Activated naive CD4-positive, alpha-beta T cell treated with anti-CD3 and anti-CD28 coated beads for 36 hours (primary cell): ENCODE measurements at regions of chr9 and their contacts with region 1.

Region 1: DNA sequence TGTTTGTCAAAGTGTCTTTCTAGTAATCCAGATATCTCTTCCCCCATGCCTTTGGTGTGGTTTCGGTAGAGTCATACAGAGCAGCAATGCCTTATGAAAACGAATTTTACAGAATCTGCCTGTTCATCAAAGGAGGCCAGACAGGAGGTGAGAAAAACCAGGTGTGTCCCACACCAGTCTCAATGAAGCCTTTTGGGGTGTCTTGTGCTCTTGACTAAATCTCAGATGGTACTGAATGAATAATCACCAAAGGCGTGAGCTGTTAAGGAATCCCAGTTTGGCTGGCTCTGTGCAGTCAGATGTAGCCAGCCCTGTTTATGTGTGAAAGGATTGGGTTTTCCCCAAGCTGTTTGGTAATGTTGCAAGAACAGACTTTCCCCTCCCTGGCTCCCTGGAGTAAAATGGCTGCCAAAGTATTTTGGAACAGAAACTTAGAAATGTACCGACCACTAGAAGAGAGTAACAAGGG is 70.8 kb upstream of the CDKN2B start:
- DNase-seq: peak; percentile 84
- H3K4me3 Mint-ChIP-seq: no peak overlapping the region
- H3K27ac Mint-ChIP-seq: no peak overlapping the region
- H3K4me1 Mint-ChIP-seq: peaks cover 33% of the 10 kb centered on the region
- H3K27me3 Mint-ChIP-seq: peaks cover 50% of the 10 kb centered on the region

Region 2: DNA sequence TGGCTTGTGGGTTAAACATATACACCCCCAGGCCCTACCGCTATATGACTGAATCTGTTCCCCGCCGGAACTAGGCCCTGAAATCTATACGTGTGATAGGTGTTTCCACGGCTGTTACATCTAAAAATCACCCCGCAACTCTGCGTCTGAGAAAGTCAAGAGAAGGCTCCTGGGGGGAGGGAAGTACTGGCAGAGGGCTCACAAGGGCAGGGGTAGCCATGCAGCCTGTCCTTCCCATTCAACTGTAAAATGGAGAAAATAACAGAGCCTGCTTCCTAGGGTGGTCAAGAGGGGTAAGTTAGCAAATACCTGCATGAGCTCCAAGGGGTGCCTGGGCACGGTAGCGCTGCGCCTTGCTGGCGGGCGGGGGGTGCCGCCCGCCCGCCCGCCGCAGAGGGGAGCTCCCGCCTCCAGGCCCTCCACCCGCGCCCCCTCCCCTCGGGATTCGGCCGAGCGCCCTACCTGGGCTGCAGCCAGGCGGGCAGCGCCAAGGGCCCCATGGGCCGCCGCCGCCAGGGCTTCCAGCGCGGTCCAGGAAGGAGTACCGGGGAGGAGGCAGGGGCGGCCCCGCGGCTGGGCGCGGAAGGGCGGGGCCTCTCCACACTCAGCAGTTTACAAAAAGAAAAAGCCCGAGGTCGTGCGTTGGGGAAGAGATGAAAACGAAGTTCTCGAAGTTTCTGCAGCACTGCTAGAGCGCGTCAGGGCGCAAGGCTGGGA is 1048.7 kb before region 1 on chr9 and contains the start of gene HACD4:
- CTCF ChIA-PET with region 1: no interaction called
- intact Hi-C with region 1: loop called (anchors 2 kb)
- DNase-seq: peak; percentile 78
- H3K4me3 Mint-ChIP-seq: peak within 1 kb of the TSS; percentile 49
- H3K27ac Mint-ChIP-seq: peak within 1 kb of the TSS; percentile 69
- H3K4me1 Mint-ChIP-seq: peaks cover 25% of the 10 kb centered on the region
- H3K27me3 Mint-ChIP-seq: no peaks in the 10 kb centered on the region
- total RNA-seq, gene HACD4: 1.1 to 1.6 TPM

Region 3: GRCh38 chr9:21688108-21689102 is 391.5 kb before region 1 on chr9:
- CTCF ChIA-PET with region 1: no interaction called
- intact Hi-C with region 1: loop called (anchors 1 kb)
- DNase-seq: no peak
- H3K4me3 Mint-ChIP-seq: no peak overlapping the region
- H3K27ac Mint-ChIP-seq: peak overlapping the region; percentile 17
- H3K4me1 Mint-ChIP-seq: peaks cover 64% of the 10 kb centered on the region
- H3K27me3 Mint-ChIP-seq: no peaks in the 10 kb centered on the region

Region 4: GRCh38 chr9:21831961-21832509 is 247.9 kb before region 1 on chr9:
- CTCF ChIA-PET with region 1: no interaction called
- intact Hi-C with region 1: loop called (anchors 1 kb)
- DNase-seq: peak; percentile 83
- H3K4me3 Mint-ChIP-seq: no peak overlapping the region
- H3K27ac Mint-ChIP-seq: peak overlapping the region; percentile 77
- H3K4me1 Mint-ChIP-seq: peaks cover 65% of the 10 kb centered on the region
- H3K27me3 Mint-ChIP-seq: no peaks in the 10 kb centered on the region

Region 5: DNA sequence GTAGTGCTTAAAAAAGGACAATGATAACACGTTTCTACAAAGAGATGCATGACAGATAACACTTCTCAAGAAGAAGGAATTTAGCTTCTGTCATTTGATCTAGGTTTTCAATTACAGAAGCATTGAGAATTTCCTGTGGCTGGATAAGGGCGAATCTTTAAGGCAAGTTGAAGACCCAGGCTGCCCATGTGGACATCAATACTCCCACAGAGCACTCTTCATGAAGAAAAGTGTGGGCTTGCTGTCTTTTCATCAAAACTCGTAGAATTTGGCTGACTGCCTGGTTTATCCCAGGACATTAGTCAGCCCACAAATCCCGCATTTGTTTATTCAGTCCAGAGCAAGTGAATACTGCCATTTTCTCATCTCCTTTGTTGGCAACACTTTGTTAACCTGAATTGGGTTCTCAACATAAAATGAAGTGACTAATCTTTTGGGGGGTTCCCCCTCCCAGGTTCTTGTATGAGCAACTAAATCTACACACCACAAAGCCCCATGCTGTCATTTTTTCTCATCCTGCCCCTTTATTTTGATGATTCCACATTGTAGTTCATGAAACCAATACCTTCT is 27.4 kb before region 1 on chr9:
- CTCF ChIA-PET with region 1: interaction called, 7 read pairs
- intact Hi-C with region 1: loop called (anchors 1 kb)
- DNase-seq: peak; percentile 67
- H3K4me3 Mint-ChIP-seq: no peak overlapping the region
- H3K27ac Mint-ChIP-seq: no peak overlapping the region
- H3K4me1 Mint-ChIP-seq: peaks cover 29% of the 10 kb centered on the region
- H3K27me3 Mint-ChIP-seq: peaks cover 20% of the 10 kb centered on the region

Region 6: GRCh38 chr9:22175972-22176545 is 96.2 kb after region 1 on chr9:
- CTCF ChIA-PET with region 1: interaction called, 6 read pairs
- intact Hi-C with region 1: loop called (anchors 1 kb)
- DNase-seq: peak; percentile 16
- H3K4me3 Mint-ChIP-seq: no peak overlapping the region
- H3K27ac Mint-ChIP-seq: no peak overlapping the region
- H3K4me1 Mint-ChIP-seq: peaks cover 10% of the 10 kb centered on the region
- H3K27me3 Mint-ChIP-seq: peaks cover 34% of the 10 kb centered on the region